ENCODE measurements at regions of chr6 and their contacts with region 1.

Region 1: GRCh38 chr6:188821-189655 is 103.2 kb upstream of the DUSP22 start:
- DNase-seq: peak; percentile 91
- ATAC-seq: peak; percentile 90
- H3K4me3 Mint-ChIP-seq: no peak overlapping the region
- H3K27ac Mint-ChIP-seq: peak overlapping the region; percentile 68
- H3K4me1 Mint-ChIP-seq: peaks cover 48% of the 10 kb centered on the region
- H3K27me3 Mint-ChIP-seq: no peaks in the 10 kb centered on the region

Region 2: GRCh38 chr6:152431-152830 is 36.6 kb before region 1 on chr6:
- CTCF ChIA-PET with region 1: no interaction called
- POLR2A ChIA-PET with region 1: no interaction called
- DNase-seq: no peak
- ATAC-seq: no peak
- H3K4me3 Mint-ChIP-seq: no peak overlapping the region
- H3K27ac Mint-ChIP-seq: no peak overlapping the region
- H3K4me1 Mint-ChIP-seq: peaks cover 44% of the 10 kb centered on the region
- H3K27me3 Mint-ChIP-seq: peaks cover 35% of the 10 kb centered on the region

Region 3: DNA sequence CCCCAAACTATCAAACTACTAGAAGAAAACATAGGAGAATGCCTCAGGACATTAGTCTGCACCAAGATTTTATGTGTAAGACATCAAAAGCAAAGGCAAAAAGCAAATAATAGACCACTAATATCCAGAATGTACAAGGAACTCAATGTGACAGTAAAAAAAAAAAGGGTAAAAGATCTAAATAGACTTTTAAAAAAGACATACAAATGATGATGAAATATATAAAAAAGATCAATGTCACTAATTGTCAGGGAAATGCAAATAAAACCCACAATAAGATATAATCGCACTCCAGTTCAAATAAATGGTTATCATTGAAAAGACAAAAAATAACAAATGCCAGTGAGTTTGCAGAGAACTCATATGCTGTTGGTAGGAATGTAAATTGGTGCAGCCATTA is 15.0 kb before region 1 on chr6:
- CTCF ChIA-PET with region 1: no interaction called
- POLR2A ChIA-PET with region 1: no interaction called
- DNase-seq: no peak
- ATAC-seq: no peak
- H3K4me3 Mint-ChIP-seq: no peak overlapping the region
- H3K27ac Mint-ChIP-seq: no peak overlapping the region
- H3K4me1 Mint-ChIP-seq: peaks cover 5% of the 10 kb centered on the region
- H3K27me3 Mint-ChIP-seq: peaks cover 18% of the 10 kb centered on the region

Region 4: DNA sequence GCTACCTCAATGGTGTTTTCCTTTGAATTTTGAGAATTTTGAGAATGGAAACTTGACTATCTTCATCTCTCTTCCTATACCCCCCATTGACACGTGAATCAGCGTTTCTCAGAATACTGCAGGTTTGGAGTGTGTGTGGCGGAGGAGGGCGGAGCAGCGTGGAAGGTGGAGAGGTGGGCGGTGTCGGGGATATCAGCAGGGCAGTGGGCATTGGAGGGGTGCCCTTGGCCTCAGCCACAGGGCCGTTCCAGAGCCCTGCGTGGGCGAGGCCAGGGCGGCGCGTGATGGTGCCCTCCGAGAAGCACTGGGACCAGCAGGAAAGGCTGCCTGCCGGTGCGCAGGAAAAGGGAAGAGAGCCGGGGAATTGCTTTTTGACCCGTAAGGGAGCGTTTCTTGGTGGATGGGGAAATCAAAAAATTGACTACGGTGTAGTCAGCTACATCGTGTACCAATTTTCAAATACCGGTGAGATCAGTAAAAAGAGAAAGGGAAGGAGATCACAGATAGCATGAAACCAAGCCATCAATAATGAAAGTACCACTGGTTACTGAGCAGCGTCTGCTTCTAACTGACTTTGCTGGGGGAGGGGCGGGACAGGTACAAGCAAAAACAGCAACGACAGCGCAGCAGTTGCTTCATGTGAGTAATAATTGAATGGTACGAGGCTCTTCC is 20.5 kb after region 1 on chr6:
- CTCF ChIA-PET with region 1: interaction called, 17 read pairs
- POLR2A ChIA-PET with region 1: interaction called, 4 read pairs
- DNase-seq: peak; percentile 55
- ATAC-seq: peak; percentile 65
- H3K4me3 Mint-ChIP-seq: peak overlapping the region; percentile 59
- H3K27ac Mint-ChIP-seq: peak overlapping the region; percentile 82
- H3K4me1 Mint-ChIP-seq: peaks cover 24% of the 10 kb centered on the region
- H3K27me3 Mint-ChIP-seq: no peaks in the 10 kb centered on the region

Region 5: GRCh38 chr6:217048-217659 is 28.1 kb after region 1 on chr6:
- CTCF ChIA-PET with region 1: interaction called, 32 read pairs
- POLR2A ChIA-PET with region 1: interaction called, 3 read pairs
- DNase-seq: peak; percentile 44
- ATAC-seq: peak; percentile 40
- H3K4me3 Mint-ChIP-seq: no peak overlapping the region
- H3K27ac Mint-ChIP-seq: peak overlapping the region; percentile 60
- H3K4me1 Mint-ChIP-seq: peaks cover 44% of the 10 kb centered on the region
- H3K27me3 Mint-ChIP-seq: no peaks in the 10 kb centered on the region

Region 6: GRCh38 chr6:227074-227782 is 38.2 kb after region 1 on chr6:
- CTCF ChIA-PET with region 1: interaction called, 29 read pairs
- POLR2A ChIA-PET with region 1: interaction called, 4 read pairs
- DNase-seq: no peak
- ATAC-seq: no peak
- H3K4me3 Mint-ChIP-seq: no peak overlapping the region
- H3K27ac Mint-ChIP-seq: peak overlapping the region; percentile 95
- H3K4me1 Mint-ChIP-seq: peaks cover 72% of the 10 kb centered on the region
- H3K27me3 Mint-ChIP-seq: no peaks in the 10 kb centered on the region

Region 7: GRCh38 chr6:291697-292505 is 102.9 kb after region 1 on chr6 and contains the start of gene DUSP22:
- CTCF ChIA-PET with region 1: interaction called, 9 read pairs
- POLR2A ChIA-PET with region 1: interaction called, 13 read pairs
- DNase-seq: peak; percentile 90
- ATAC-seq: peak; percentile 75
- H3K4me3 Mint-ChIP-seq: peak within 1 kb of the TSS; percentile 86
- H3K27ac Mint-ChIP-seq: peak within 1 kb of the TSS; percentile 97
- H3K4me1 Mint-ChIP-seq: peaks cover 67% of the 10 kb centered on the region
- H3K27me3 Mint-ChIP-seq: no peaks in the 10 kb centered on the region
- total RNA-seq, gene DUSP22: 32.6 to 33.2 TPM

Region 8: DNA sequence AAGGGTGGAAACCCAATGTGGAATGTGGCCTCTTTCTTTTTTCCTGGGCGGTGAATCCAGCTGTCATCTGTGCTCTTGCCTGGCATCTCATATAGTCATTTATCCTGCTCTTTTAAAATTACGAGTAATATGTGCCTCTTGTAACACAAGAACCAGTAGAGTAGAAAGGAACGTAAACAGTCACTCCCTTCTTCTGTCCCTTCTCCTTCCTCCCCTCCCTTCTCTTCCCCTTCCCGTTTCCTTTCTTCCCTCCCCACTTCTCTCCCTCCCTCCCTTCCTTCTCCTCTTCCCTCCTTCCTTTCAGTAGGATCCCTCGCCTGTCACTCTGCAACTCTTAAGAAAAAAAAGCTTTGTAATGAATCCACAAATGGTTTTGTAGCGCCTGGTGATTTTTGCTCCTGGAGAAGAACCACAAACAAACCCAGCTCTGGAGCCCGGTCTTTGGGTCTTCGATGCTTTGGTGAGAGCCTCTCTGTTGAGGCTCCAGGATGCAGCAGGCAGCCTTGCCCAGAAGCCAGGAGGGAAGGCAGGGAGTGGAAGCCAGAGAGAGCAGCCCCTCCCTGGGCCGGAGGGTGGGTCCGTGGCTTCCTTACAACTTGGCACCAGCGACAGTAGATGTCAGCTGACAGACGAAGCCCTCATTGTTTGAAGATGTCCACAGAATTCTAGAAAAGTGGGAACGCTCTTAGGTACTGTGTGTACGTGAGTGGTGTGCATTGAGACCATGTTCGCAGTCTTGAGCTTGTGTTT is 118.2 kb after region 1 on chr6:
- CTCF ChIA-PET with region 1: interaction called, 10 read pairs
- POLR2A ChIA-PET with region 1: no interaction called
- DNase-seq: no peak
- ATAC-seq: no peak
- H3K4me3 Mint-ChIP-seq: no peak overlapping the region
- H3K27ac Mint-ChIP-seq: no peak overlapping the region
- H3K4me1 Mint-ChIP-seq: peaks cover 12% of the 10 kb centered on the region
- H3K27me3 Mint-ChIP-seq: no peaks in the 10 kb centered on the region

Region 9: GRCh38 chr6:336159-337019 is 147.4 kb after region 1 on chr6:
- CTCF ChIA-PET with region 1: interaction called, 14 read pairs
- POLR2A ChIA-PET with region 1: interaction called, 5 read pairs
- DNase-seq: peak; percentile 56
- ATAC-seq: peak; percentile 35
- H3K4me3 Mint-ChIP-seq: peak overlapping the region; percentile 65
- H3K27ac Mint-ChIP-seq: peak overlapping the region; percentile 89
- H3K4me1 Mint-ChIP-seq: peaks cover 60% of the 10 kb centered on the region
- H3K27me3 Mint-ChIP-seq: no peaks in the 10 kb centered on the region

Measured in activated CD8-positive, alpha-beta T cell treated with anti-CD3 and anti-CD28 coated beads, Interleukin-2, amount 10 ng/mL, durations not matched to agents 7 days and 5 days (primary cell).